ENCODE measurements at regions of chr6 and their contacts with region 1.

Region 1: DNA sequence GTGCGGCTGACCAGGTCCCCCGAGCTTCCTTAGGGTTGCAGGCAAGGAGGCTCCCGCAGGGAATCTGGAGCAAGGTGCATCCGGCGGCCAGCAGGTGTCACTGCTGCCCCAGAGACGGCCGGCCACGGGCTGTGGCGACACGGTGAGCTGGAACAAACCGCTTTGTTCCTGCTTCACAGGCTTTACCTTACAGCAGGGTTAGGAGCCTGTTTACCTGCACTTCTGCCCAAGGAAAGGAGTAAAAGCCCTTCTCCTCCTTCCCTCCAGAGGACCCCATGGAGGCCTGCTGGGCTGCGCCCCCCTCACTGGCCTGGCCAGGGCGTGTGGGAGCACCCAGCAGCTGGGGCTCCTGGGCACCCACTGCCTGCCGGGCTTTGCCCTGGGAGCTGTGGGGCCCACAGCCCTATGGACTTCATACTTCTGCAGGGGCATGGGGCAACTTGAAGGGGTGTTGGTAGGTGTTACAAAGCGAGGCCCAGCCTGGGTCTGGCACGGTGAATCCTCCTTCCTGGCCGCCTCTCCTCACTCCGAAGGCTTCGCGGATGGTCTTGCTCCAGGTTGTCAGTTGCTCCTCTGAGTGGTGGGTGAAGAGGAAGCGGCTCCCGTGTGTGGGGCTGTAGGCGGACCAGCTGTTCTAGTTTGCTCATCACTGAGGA is 88.4 kb downstream of the CDC5L start:
- DNase-seq: no peak
- H3K4me3 ChIP-seq: no peak overlapping the region
- H3K27ac ChIP-seq: no peak overlapping the region
- H3K27me3 ChIP-seq: peaks cover 26% of the 10 kb centered on the region
- CTCF ChIP-seq: peak; percentile 96

Region 2: DNA sequence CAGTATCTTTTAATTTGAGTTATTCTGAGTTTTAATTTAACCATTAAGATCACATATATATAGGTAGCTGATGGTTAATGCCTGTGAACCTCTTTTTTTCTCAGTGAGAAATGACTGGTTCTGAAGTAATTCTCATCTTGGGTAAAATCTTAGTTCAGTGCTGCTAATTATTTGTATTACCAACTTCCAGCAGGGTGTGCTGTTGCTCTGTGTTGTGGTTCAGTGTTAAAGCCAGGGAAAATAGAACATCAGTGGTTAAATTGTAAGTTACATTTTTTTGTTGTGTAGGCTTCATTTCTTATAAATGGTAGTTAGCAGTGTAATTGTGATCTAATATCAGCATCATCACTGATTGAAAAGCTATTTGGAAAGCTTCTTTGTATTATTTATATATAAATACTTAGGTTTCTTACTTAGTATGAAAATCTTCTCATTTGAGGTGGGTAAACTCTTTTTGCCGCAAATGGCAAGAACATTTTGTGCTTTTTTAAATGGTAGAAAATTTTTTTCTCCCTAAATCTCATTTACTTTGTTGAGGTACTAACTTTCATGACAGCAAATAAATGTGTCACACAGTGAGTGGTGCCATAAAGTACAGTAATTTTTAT is 44.7 kb before region 1 on chr6:
- CTCF ChIA-PET with region 1: interaction called, 12 read pairs
- POLR2A ChIA-PET with region 1: no interaction called
- DNase-seq: peak; percentile 43
- H3K4me3 ChIP-seq: no peak overlapping the region
- H3K27ac ChIP-seq: no peak overlapping the region
- H3K27me3 ChIP-seq: no peaks in the 10 kb centered on the region
- CTCF ChIP-seq: peak; percentile 79

Region 3: DNA sequence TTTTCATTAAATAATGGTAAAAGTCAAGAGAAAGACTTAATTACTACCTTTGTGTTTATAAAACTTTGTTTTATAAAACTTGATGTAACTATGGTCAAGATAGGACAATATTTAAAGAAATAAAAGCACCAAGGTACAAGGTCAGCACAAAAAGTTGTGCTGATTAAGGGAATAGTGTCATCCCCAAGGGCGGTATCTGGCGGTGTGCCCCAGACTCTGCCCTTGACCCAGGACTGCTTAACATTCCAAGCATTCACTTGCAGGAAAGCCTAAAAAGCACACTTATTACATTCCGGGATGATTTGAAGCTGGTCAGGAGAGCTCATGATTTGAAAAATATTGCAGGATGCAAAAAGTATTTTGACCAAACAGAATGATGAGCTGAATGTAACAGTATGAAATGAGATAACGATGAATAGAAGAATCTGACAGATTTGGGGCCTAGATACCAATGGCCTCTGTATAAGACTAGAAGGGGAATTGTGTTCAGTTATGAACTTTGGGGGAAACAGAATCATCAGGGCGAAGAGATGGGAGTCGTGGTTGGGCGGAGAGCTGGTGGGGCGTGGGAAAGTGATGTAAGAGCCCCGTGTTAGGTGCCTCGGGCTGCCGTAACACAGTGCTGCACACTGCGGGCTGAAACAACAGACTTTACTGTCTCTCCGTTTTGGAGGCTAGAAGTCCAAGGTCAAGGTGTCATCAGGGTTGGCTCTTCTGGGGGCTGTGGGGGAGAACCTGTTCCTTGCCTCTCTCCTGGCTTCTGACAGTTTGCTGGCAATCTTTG is 11.2 kb before region 1 on chr6:
- CTCF ChIA-PET with region 1: interaction called, 40 read pairs
- POLR2A ChIA-PET with region 1: no interaction called
- DNase-seq: no peak
- H3K4me3 ChIP-seq: no peak overlapping the region
- H3K27ac ChIP-seq: no peak overlapping the region
- H3K27me3 ChIP-seq: no peaks in the 10 kb centered on the region
- CTCF ChIP-seq: no peak

Region 4: DNA sequence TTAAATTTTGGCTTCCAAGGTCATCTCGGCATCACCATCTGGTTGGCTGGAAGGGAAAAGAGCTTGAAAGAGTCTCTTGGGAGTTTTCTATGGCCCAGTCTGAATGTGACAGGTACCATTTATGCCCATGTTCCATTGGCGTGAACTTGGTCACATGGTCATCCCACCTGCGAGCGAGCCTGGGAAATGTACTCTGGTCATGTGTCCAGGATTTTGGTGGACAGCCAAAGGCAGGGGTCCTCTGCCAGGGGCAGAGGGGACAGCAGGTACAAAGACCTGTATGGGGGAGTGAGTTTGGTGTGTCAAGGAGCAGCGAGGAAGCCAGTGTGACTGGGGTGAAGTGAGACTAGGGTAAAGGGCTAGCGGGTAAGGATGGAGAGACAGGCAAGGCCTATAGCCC is 24.2 kb after region 1 on chr6:
- CTCF ChIA-PET with region 1: no interaction called
- POLR2A ChIA-PET with region 1: no interaction called
- DNase-seq: no peak
- H3K4me3 ChIP-seq: no peak overlapping the region
- H3K27ac ChIP-seq: no peak overlapping the region
- H3K27me3 ChIP-seq: peaks cover 57% of the 10 kb centered on the region
- CTCF ChIP-seq: no peak

Region 5: GRCh38 chr6:44593539-44593944 is 117.6 kb after region 1 on chr6:
- CTCF ChIA-PET with region 1: interaction called, 35 read pairs
- POLR2A ChIA-PET with region 1: no interaction called
- DNase-seq: peak; percentile 26
- H3K4me3 ChIP-seq: no peak overlapping the region
- H3K27ac ChIP-seq: no peak overlapping the region
- H3K27me3 ChIP-seq: peaks cover 16% of the 10 kb centered on the region
- CTCF ChIP-seq: peak; percentile 60

Region 6: DNA sequence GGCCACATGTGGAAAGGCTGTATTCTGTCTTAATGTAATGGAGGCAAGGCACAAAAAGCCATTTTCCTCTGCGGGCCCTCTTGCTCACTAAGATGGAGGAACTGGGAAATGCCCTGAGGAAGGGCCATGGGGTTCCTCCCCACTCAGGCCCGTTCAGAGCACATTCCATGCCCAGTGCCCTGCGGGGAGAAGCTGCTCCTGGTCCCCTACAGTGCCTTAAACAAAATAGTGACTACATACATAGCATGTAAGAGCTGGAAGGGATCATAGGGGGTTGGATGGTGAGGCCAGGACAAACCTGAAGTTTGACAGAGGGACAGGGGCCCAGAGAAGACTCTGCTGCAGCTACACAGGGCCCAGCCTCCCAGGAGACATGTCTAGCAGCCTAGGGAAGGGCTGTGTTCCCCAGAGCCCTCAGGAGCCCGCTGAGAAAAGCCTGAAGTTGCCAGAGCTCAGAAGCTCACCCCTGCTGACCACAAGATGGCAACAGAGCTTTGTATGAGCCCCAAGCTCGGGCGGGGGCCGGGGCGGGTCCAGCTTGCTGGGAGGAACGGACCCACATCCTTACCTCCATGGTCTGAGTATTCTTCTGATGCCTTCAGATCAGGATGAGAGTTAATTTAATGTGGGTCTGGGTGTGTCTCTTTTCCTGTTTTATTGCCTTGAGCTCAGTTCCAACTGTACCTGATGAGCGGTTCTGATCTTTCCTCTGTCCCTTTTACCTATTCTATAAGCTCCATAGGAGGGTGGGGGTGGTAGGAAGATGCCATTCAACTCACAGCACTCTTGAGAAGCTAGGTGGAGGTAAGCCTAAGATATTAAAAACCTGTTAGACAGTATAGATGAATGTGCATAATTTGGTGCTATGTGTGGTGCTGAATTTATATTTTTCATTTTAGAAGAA is 154.5 kb after region 1 on chr6:
- CTCF ChIA-PET with region 1: interaction called, 60 read pairs
- POLR2A ChIA-PET with region 1: no interaction called
- DNase-seq: peak; percentile 23
- H3K4me3 ChIP-seq: no peak overlapping the region
- H3K27ac ChIP-seq: no peak overlapping the region
- H3K27me3 ChIP-seq: peaks cover 20% of the 10 kb centered on the region
- CTCF ChIP-seq: peak; percentile 71

Region 7: DNA sequence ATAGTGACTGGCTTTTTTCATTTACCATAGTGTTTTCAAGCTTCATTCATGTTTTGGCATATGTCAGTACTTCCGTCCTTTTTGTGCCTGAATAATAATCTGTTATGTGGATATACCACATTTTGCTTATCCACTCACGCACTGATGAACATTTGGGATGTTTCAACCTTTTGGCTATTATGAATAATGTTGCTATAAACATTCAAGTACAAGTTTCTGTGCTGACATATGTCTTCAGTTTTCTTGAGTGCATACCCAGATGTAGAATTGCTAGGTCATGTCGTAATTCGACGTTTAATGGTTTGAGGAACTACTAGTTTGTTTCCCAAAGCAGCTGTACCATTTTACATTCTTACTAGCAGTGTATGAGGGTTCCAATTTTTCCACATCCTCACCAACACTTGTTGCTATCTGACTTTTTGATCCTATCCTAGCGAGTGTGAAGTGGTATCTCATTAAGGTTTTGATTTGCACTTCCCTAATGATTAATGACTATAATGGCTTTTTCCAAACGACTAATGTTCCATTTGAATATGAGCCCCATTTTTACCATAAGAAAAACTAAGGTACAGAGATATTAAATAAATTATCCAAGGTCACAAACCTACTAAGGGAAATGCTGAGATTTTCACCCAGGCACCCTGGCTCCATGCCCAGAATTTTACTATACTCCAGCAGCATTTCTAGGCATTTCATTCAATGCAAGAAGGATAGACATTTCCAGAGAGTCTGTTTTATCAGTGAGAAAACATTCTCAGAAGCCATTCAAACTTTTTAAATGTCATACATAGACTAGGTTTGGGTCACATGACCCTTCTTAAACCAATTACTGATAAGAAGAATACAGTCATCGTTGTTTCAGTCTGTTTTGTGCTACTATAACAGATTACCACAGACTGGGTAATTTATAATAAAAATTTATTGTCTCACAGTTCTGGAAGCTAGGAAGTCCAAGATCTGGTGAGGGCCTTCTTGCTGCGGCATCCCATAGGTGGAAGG is 781.1 kb after region 1 on chr6:
- CTCF ChIA-PET with region 1: no interaction called
- POLR2A ChIA-PET with region 1: no interaction called
- DNase-seq: no peak
- H3K4me3 ChIP-seq: no peak overlapping the region
- H3K27ac ChIP-seq: no peak overlapping the region
- H3K27me3 ChIP-seq: no peaks in the 10 kb centered on the region
- CTCF ChIP-seq: no peak

Region 8: DNA sequence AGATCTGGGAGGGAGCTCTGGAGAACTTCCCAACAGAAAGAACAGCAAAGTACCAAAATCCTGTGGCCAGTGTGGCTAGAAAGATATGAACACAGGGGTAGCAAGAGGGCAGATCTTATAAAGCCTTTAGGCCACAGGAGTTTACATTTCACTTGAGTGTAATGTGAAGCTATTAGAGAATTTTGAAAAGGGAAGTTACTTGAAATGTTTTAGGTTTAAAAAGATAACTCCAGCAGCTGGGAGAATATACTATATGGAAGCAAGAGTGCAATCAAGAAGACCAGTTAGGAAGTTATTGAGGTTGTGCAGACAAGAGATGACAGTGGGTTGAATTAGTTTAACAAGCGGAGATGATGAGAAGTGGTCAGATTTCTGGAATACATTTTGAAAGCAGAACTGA is 894.0 kb after region 1 on chr6:
- CTCF ChIA-PET with region 1: interaction called, 11 read pairs
- POLR2A ChIA-PET with region 1: no interaction called
- DNase-seq: no peak
- H3K4me3 ChIP-seq: no peak overlapping the region
- H3K27ac ChIP-seq: no peak overlapping the region
- H3K27me3 ChIP-seq: no peaks in the 10 kb centered on the region
- CTCF ChIP-seq: no peak

Measured in AG04450 (cell line).